ENCODE measurements at regions of chr15 and their contacts with region 1.

Region 1: GRCh38 chr15:76190834-76191538 is 120.3 kb downstream of the ETFA start:
- DNase-seq: peak; percentile 89
- ATAC-seq: peak; percentile 90

Region 2: GRCh38 chr15:76286271-76286879 is 95.4 kb after region 1 on chr15:
- intact Hi-C with region 1: loop called (anchors 2 kb)
- DNase-seq: no peak
- ATAC-seq: no peak